GM10248 (cell line): ENCODE measurements at regions of chr1 and their contacts with region 1.

Region 1: DNA sequence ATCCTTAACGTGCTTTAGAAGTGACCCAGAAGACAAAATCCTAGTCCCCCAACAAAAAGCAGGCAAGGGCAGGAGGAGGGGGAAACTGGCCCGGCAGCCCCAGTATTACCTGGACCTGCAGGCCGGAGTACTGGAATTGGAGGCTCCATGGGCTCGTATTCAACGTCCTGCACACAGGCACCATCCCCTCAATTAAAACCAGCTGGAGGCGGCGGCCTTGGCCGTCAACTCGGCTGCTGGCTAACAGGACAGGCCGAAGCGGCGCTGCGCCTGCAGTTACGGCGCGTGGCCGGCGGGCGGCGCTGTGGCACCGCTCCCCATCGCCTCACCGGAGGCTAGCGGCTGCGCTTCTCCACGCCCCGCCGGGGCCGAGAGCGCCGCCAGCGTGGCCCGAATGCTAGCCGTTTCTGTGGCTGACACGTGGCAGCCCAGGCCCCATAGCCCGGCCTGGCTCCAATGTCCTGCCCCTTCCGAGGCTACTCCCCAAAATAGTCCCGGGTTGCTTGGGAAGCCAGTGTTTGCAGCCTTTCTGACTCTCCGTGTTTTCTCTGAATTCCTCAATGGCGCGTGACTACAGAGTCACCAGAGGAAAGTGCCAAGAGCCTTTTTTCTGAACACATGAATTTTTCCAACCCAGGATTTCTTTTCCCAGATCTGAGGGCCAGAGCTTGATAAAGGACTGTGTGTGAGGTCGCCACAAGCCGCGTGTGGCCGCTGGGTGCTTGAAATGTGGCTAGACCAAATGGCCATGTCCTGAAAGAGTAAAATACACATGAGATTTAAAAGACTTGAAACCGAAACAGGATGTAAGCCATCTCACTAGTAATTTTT is 82.5 kb downstream of the HHIPL2 start:
- DNase-seq: peak; percentile 90
- CTCF ChIP-seq: peak; percentile 100

Region 2: GRCh38 chr1:222643938-222644635 is 178.7 kb after region 1 on chr1:
- CTCF ChIA-PET with region 1: interaction called, 10 read pairs
- POLR2A ChIA-PET with region 1: no interaction called
- DNase-seq: peak; percentile 92
- CTCF ChIP-seq: no peak

Region 3: GRCh38 chr1:223081181-223081994 is 616.0 kb after region 1 on chr1:
- CTCF ChIA-PET with region 1: interaction called, 10 read pairs
- POLR2A ChIA-PET with region 1: no interaction called
- DNase-seq: peak; percentile 87
- CTCF ChIP-seq: peak; percentile 85